GM13976 (cell line): ENCODE measurements at regions of chr14 and their contacts with region 1.

Region 1: GRCh38 chr14:92135267-92135666 is 13.5 kb downstream of the CPSF2 start:
- DNase-seq: peak; percentile 21
- CTCF ChIP-seq: peak; percentile 18

Region 2: DNA sequence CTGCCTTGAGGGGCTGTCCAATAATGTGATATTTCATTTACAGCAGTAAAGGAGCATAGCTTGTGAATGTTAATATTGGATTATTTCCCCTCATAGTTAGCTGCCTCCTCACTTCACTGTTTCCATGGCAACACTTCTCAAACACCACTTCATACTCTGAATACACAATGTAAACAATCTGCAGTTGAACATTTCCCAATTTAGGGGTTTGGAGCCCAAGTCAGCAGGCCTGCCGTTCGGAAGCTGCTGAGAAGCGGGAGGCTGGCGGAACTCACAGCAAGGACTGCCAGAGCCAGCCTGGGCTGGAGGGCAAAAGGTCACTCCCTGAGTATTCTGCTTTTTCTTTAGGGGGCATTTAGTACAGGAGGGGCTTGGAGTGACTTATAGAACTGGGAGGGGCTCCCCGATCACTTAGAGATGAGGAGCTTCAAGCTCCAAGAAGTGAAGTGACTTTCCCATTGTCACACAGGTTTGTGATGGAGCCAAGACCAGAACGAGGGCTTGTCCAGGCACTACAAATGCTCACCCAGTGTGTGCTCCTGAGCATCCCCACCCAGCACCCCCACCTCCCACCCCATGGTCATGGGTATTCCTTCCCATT is 175.6 kb after region 1 on chr14:
- in situ Hi-C with region 1: no loop called
- DNase-seq: no peak
- CTCF ChIP-seq: no peak

Region 3: GRCh38 chr14:92686900-92687444 is 551.7 kb after region 1 on chr14:
- in situ Hi-C with region 1: loop called (anchors 25 kb)
- DNase-seq: peak; percentile 84
- CTCF ChIP-seq: peak; percentile 100